Mammary epithelial cell (primary cell): ENCODE measurements at regions of chr22 and their contacts with region 1.

Region 1: GRCh38 chr22:19002690-19003050 is 66.6 kb upstream of the PRODH start:
- DNase-seq: no peak
- H3K4me3 ChIP-seq: no peak overlapping the region
- H3K27ac ChIP-seq: no peak overlapping the region
- H3K4me1 ChIP-seq: no peaks in the 10 kb centered on the region
- H3K27me3 ChIP-seq: peaks cover 4% of the 10 kb centered on the region
- CTCF ChIP-seq: no peak

Region 2: GRCh38 chr22:18935889-18936529 is 66.7 kb before region 1 on chr22 and contains the start of gene PRODH:
- CTCF ChIA-PET with region 1: no interaction called
- dilution Hi-C with region 1: no loop called
- in situ Hi-C with region 1: no loop called
- intact Hi-C with region 1: no loop called
- DNase-seq: no peak
- H3K4me3 ChIP-seq: no peak within 1 kb of the TSS
- H3K27ac ChIP-seq: no peak within 1 kb of the TSS
- H3K4me1 ChIP-seq: no peaks in the 10 kb centered on the region
- H3K27me3 ChIP-seq: no peaks in the 10 kb centered on the region
- CTCF ChIP-seq: no peak
- total RNA-seq, gene PRODH: 2.7 to 6.7 TPM

Region 3: DNA sequence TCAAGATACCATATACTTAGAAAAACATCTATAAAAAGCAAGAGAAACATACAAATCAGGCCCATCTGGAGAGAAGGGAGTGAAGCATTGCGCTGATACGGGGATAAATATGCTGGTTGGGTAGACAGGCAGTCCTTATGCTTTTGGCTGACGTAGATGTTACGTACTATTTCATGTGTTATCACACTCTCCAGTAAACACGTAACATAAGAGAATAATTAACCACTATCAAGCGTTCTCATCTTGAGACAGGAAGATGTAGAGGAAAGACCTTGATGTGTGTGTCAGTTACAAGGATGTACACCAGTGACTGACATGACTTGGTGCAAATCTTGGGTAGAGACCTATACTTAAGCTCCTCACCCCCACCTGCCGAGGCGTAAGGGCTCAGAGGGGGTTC is 20.1 kb after region 1 on chr22:
- CTCF ChIA-PET with region 1: no interaction called
- dilution Hi-C with region 1: no loop called
- in situ Hi-C with region 1: no loop called
- intact Hi-C with region 1: no loop called
- DNase-seq: no peak
- H3K4me3 ChIP-seq: no peak overlapping the region
- H3K27ac ChIP-seq: no peak overlapping the region
- H3K4me1 ChIP-seq: no peaks in the 10 kb centered on the region
- H3K27me3 ChIP-seq: peaks cover 2% of the 10 kb centered on the region
- CTCF ChIP-seq: no peak

Region 4: GRCh38 chr22:19149991-19150390 is 147.3 kb after region 1 on chr22 and contains the start of gene GSC2:
- CTCF ChIA-PET with region 1: no interaction called
- dilution Hi-C with region 1: loop called (anchors 10 kb)
- in situ Hi-C with region 1: no loop called
- intact Hi-C with region 1: no loop called
- DNase-seq: no peak
- H3K4me3 ChIP-seq: peak within 1 kb of the TSS in 1 of 3 experiments; percentile 13
- H3K27ac ChIP-seq: no peak within 1 kb of the TSS
- H3K4me1 ChIP-seq: no peaks in the 10 kb centered on the region
- H3K27me3 ChIP-seq: peaks cover 32% of the 10 kb centered on the region
- CTCF ChIP-seq: no peak
- total RNA-seq, gene GSC2: not detected

Region 5: DNA sequence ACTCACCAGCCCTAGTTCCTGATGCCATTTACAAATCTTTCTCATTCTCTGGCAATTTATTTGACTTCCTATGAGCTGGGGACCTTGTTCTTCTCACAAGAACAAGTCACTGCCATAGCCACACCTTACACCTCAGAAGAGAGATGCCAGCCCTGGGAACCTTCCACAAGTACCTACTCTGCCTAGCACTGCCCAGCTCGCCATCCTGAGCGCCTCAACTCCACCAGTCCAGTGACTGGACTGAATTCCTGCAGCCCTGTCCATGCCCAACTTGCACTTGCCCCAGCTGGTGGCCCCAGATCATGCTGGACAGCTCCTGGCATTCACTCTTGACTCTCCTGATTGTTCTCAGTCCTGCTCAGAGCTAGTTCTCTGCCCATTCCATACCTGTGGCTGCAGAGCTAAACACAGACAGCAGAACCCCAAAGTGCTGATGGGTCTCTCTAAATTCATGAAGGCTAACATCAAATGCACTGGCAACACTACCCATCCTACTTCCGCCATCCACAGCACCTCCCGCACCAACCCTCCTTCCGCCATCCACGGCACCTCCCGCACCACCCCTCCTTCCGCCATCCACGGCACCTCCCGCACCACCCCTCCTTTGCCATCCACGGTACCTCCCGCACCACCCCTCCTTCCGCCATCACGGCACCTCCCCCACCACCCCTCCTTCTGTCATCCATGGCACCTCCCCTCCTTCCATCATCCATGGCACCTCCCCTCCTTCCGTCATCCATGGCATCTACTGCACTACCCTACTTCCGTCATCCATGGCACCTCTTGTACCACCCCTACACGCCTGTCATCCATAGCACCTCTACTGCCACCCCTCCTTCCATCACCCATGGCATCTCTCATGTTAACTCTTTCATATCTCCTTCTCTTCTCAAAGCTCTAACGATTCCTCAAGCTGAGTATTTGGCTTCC is 199.5 kb after region 1 on chr22:
- CTCF ChIA-PET with region 1: no interaction called
- dilution Hi-C with region 1: loop called (anchors 10 kb)
- in situ Hi-C with region 1: no loop called
- intact Hi-C with region 1: no loop called
- DNase-seq: no peak
- H3K4me3 ChIP-seq: no peak overlapping the region
- H3K27ac ChIP-seq: no peak overlapping the region
- H3K4me1 ChIP-seq: no peaks in the 10 kb centered on the region
- H3K27me3 ChIP-seq: no peaks in the 10 kb centered on the region
- CTCF ChIP-seq: no peak